ENCODE measurements at regions of chr4 and their contacts with region 1.

Region 1: GRCh38 chr4:26719954-26720552 is 136.2 kb downstream of the TBC1D19 start:
- DNase-seq: peak in 2 of 9 experiments; percentile 11 to 21
- ATAC-seq: no peak
- H3K4me3 ChIP-seq: no peak overlapping the region
- H3K4me3 Mint-ChIP-seq: no peak overlapping the region
- H3K27ac ChIP-seq: no peak overlapping the region
- H3K27ac Mint-ChIP-seq: no peak overlapping the region
- H3K4me1 ChIP-seq: peaks cover 13% of the 10 kb centered on the region
- H3K4me1 Mint-ChIP-seq: peaks cover 24% of the 10 kb centered on the region
- H3K27me3 ChIP-seq: no peaks in the 10 kb centered on the region
- H3K27me3 Mint-ChIP-seq: no peaks in the 10 kb centered on the region
- CTCF ChIP-seq: peak; percentile 50

Region 2: DNA sequence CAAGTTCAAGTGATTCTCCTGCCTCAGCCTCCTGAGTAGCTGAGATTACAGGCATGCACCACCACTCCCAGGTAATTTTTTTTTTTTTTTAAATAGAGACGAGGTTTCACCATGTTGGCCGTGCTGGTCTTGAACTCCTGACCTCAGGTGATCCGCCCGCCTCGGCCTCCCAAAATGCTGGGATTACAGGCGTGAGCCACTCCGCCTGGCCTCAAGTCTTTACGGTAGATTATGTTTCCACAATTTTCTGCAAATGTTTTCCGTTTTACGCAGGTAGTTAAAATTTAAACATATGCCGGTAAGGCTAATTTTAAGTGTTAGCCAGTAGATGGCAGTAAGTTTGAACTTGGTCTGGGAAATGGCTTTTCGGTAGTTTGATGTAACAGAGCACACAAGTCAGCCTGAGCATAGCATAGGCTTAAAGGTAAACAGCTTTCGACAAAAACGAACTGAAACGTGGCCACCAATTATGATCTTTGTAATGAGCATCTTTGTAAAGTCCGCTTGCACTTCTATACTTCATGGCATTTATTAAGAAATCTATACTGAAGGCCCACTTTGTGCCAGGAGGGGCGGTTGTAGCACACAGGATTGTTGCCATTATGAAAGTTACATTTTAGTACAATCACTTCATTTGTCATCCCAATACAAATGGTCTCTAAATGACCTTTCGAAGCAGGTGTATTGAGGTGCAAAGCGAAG is 260.8 kb before region 1 on chr4:
- CTCF ChIA-PET with region 1: interaction called, 8 read pairs
- POLR2A ChIA-PET with region 1: no interaction called
- intact Hi-C with region 1: loop called (anchors 1 to 2 kb)
- DNase-seq: peak in 2 of 9 experiments; percentile 43 to 59
- ATAC-seq: peak; percentile 50
- H3K4me3 ChIP-seq: no peak overlapping the region
- H3K4me3 Mint-ChIP-seq: peak overlapping the region; percentile 69
- H3K27ac ChIP-seq: no peak overlapping the region
- H3K27ac Mint-ChIP-seq: peak overlapping the region; percentile 72
- H3K4me1 ChIP-seq: peaks cover 7% of the 10 kb centered on the region
- H3K4me1 Mint-ChIP-seq: peaks cover 21% of the 10 kb centered on the region
- H3K27me3 ChIP-seq: no peaks in the 10 kb centered on the region
- H3K27me3 Mint-ChIP-seq: no peaks in the 10 kb centered on the region
- CTCF ChIP-seq: peak; percentile 53

Region 3: DNA sequence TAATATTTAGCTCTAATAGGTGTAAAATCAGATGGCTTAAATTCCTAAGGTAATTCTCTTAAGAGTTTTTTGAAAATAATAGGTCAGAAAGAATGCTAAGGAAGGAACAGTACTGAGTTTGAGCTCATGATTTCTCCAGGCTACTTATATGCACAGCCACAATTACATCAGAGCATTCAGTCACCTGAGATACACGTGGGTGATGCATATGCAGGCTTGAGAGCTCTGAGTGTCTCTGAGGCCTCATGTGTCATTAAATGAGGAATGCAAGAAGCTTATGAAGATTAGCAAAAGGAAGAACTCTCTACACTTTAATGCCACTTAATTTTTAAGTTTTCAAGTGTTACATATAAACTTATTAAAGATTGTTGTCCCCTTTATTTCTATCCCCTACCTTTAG is 16.6 kb after region 1 on chr4:
- CTCF ChIA-PET with region 1: no interaction called
- POLR2A ChIA-PET with region 1: no interaction called
- intact Hi-C with region 1: no loop called
- DNase-seq: no peak
- ATAC-seq: no peak
- H3K4me3 ChIP-seq: no peak overlapping the region
- H3K4me3 Mint-ChIP-seq: no peak overlapping the region
- H3K27ac ChIP-seq: no peak overlapping the region
- H3K27ac Mint-ChIP-seq: no peak overlapping the region
- H3K4me1 ChIP-seq: no peaks in the 10 kb centered on the region
- H3K4me1 Mint-ChIP-seq: no peaks in the 10 kb centered on the region
- H3K27me3 ChIP-seq: no peaks in the 10 kb centered on the region
- H3K27me3 Mint-ChIP-seq: no peaks in the 10 kb centered on the region
- CTCF ChIP-seq: no peak

Region 4: DNA sequence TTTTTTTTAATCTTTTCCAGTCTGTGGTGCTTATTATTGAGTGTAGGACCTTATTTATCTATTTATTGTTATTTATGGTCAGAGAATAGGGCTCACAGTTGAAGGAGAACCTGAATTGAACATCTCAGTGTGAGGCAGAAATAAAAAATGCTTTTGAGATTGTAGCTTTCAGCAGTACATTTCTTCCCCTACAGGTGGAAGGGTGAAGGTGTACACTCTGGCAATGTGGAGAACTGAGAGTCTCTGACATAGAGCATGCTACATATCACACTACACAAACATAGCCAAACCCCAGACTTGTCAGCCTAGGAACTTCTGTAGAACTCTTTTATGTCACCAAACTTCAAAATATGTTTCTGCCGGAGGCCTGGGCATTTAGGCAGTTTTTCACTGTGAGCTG is 280.8 kb after region 1 on chr4:
- CTCF ChIA-PET with region 1: interaction called, 4 read pairs
- POLR2A ChIA-PET with region 1: no interaction called
- intact Hi-C with region 1: loop called in 1 of 2 experiments (anchors 5 kb)
- DNase-seq: peak in 2 of 9 experiments; percentile 36 to 56
- ATAC-seq: peak; percentile 76
- H3K4me3 ChIP-seq: no peak overlapping the region
- H3K4me3 Mint-ChIP-seq: no peak overlapping the region
- H3K27ac ChIP-seq: no peak overlapping the region
- H3K27ac Mint-ChIP-seq: peak overlapping the region; percentile 73
- H3K4me1 ChIP-seq: peaks cover 15% of the 10 kb centered on the region
- H3K4me1 Mint-ChIP-seq: peaks cover 50% of the 10 kb centered on the region
- H3K27me3 ChIP-seq: no peaks in the 10 kb centered on the region
- H3K27me3 Mint-ChIP-seq: no peaks in the 10 kb centered on the region
- CTCF ChIP-seq: peak; percentile 47

Region 5: GRCh38 chr4:27338530-27338929 is 618.5 kb after region 1 on chr4:
- CTCF ChIA-PET with region 1: no interaction called
- POLR2A ChIA-PET with region 1: no interaction called
- intact Hi-C with region 1: no loop called
- DNase-seq: no peak
- ATAC-seq: no peak
- H3K4me3 ChIP-seq: no peak overlapping the region
- H3K4me3 Mint-ChIP-seq: no peak overlapping the region
- H3K27ac ChIP-seq: no peak overlapping the region
- H3K27ac Mint-ChIP-seq: no peak overlapping the region
- H3K4me1 ChIP-seq: no peaks in the 10 kb centered on the region
- H3K4me1 Mint-ChIP-seq: no peaks in the 10 kb centered on the region
- H3K27me3 ChIP-seq: no peaks in the 10 kb centered on the region
- H3K27me3 Mint-ChIP-seq: no peaks in the 10 kb centered on the region
- CTCF ChIP-seq: no peak